Posterior cingulate gyrus (tissue), 11 donors: ENCODE measurements at regions of chrX and their contacts with region 1.

Region 1: GRCh38 chrX:73943693-73944562 is 360.1 kb upstream of the ZCCHC13 start:
- DNase-seq: peak; percentile 76 to 98 (median 89)

Region 2: GRCh38 chrX:73863268-73863667 is 80.7 kb before region 1 on chrX:
- intact Hi-C with region 1: loop called (anchors 5 kb)
- DNase-seq: no peak

Region 3: GRCh38 chrX:73916931-73917667 is 26.8 kb before region 1 on chrX:
- intact Hi-C with region 1: no loop called
- DNase-seq: no peak

Region 4: GRCh38 chrX:74195605-74196004 is 251.7 kb after region 1 on chrX:
- intact Hi-C with region 1: no loop called
- DNase-seq: peak in 1 of 10 donors; percentile 31

Region 5: DNA sequence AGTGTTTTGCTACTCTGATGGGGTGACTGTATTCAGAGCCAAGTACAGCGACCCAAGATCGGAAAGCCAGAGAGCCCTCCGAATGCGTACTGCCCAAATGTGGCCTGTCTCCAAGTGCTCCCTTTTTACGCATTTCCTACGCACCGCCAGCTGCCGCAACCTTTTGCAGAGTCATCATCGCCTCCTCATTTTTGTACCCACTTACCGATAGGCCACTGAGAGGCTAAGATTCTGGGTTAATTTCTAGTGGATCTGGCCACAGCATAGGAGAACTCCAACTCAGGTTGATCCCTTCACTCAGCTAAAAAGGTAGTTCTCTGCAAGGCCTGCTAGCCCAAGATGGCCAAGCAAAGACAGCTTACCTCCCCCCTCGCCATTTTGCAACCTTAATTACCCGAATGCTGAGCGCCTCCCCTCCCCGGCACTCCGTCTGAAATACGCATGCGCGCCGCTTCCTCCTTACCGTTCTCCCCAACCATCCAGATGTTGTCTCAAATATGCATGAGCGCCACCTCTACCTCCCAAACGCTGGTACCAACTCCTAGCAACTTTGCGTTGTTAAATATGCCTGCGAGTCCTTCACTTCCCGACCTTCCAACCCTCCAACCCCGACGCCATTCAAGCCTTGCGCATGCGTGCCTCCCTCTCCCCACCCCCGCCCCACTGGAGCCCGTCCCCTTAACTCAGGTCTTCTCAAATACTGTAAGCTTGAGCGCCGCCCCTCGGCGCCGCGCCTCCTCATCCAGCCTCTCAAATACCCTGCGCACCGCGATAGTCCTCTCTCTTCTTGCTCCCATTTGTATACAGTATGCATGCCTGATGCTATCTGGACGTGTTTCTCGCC is 348.3 kb after region 1 on chrX:
- intact Hi-C with region 1: loop called (anchors 10 kb)
- DNase-seq: peak; percentile 60 to 97 (median 82)